Activated T-helper 1 cell treated with anti-CD3 and anti-CD28 coated beads, Interleukin-12 subunit alpha, Interleukin-12 subunit beta, Interleukin-2, Interleukin-4 antibody, amounts not matched to agents 30 ng/mL and 10 ng/mL and 1 ng/mL, durations not matched to agents 14 hours and 24 hours and 36 hours (primary cell): ENCODE measurements at regions of chrX and their contacts with region 1.

Region 1: DNA sequence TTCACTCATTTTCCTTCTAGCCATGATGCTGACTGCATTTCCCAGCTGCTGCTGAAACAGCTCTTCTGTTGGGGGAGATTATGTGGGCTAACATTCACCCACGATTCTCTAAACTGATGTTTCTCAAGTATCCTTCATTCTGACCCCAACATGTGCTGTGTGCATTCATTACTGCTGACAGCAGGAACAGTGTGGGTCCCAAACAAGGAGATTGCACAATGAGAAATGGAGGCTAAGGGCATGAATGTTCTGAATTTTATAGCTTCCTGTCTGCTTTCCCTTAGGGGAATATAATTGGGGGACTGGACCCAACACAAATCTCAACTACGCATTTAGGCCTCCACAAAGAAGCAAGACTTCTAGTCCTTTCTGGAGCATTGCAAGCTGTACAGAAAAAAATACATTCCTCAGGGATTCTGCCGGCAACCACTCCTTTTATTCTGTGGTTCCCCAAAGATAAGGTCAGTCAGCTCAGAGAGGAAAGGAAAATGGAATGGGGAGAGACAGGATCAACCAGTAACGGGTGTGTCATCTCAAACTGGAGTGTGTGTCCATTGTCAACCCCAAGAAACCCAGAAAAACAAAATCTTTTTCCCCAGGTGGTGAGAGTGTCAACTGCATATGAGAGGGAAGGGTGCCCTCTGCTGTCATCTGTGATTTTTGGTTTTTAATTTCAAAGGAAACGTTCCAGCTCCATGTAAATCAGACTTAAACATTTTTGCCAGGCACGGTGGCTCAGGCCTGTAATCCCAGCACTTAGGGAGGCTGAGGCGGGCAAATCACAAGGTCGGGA is 81.5 kb upstream of the EGFL6 start:
- DNase-seq: peak; percentile 27
- H3K4me3 Mint-ChIP-seq: peak overlapping the region; percentile 7
- H3K27ac Mint-ChIP-seq: peak overlapping the region; percentile 61
- H3K4me1 Mint-ChIP-seq: peaks cover 26% of the 10 kb centered on the region
- H3K27me3 Mint-ChIP-seq: no peaks in the 10 kb centered on the region

Region 2: GRCh38 chrX:12984629-12985319 is 503.2 kb before region 1 on chrX:
- intact Hi-C with region 1: loop called (anchors 2 kb)
- DNase-seq: peak; percentile 59
- H3K4me3 Mint-ChIP-seq: peak overlapping the region; percentile 45
- H3K27ac Mint-ChIP-seq: peak overlapping the region; percentile 93
- H3K4me1 Mint-ChIP-seq: peaks cover 65% of the 10 kb centered on the region
- H3K27me3 Mint-ChIP-seq: no peaks in the 10 kb centered on the region

Region 3: GRCh38 chrX:12999422-12999821 is 488.5 kb before region 1 on chrX:
- intact Hi-C with region 1: loop called (anchors 5 kb)
- DNase-seq: peak; percentile 51
- H3K4me3 Mint-ChIP-seq: peak overlapping the region; percentile 63
- H3K27ac Mint-ChIP-seq: peak overlapping the region; percentile 98
- H3K4me1 Mint-ChIP-seq: peaks cover 59% of the 10 kb centered on the region
- H3K27me3 Mint-ChIP-seq: no peaks in the 10 kb centered on the region

Region 4: DNA sequence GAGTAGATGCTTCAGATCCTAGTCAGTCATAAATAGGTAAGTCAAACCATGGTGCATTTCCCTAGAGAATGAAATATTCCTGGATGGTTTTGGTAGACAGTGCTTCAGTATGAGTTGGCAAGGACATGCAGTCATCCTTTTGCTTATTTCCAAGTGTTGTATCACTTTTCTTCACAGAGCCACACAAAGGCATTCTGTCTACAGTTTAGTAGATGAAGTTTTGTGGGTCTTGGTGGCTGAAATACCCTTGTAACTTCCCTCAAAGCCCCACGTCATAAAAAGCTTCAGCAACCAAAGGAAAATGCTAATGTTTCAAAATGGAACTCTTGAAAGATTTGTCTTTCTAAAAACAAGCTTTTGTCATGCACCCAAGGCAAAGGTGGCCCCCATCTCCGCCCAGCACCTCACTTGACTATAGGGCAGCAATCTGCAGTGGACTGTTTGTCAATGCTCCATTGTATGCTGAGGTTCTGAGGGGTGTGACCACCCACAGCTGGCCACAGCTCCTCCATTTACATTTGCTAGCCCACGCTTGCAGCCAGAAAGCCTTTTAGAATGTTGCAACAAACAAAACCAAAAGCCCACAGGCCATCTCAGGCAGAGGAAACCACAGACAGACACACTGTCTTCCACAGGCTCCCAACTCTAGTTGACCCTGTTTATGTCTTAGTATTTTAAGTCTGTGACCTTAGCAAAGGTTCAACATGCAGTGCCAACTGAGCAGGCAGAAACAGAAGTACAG is 356.4 kb before region 1 on chrX:
- intact Hi-C with region 1: no loop called
- DNase-seq: peak; percentile 6
- H3K4me3 Mint-ChIP-seq: peak overlapping the region; percentile 26
- H3K27ac Mint-ChIP-seq: peak overlapping the region; percentile 55
- H3K4me1 Mint-ChIP-seq: peaks cover 33% of the 10 kb centered on the region
- H3K27me3 Mint-ChIP-seq: no peaks in the 10 kb centered on the region

Region 5: DNA sequence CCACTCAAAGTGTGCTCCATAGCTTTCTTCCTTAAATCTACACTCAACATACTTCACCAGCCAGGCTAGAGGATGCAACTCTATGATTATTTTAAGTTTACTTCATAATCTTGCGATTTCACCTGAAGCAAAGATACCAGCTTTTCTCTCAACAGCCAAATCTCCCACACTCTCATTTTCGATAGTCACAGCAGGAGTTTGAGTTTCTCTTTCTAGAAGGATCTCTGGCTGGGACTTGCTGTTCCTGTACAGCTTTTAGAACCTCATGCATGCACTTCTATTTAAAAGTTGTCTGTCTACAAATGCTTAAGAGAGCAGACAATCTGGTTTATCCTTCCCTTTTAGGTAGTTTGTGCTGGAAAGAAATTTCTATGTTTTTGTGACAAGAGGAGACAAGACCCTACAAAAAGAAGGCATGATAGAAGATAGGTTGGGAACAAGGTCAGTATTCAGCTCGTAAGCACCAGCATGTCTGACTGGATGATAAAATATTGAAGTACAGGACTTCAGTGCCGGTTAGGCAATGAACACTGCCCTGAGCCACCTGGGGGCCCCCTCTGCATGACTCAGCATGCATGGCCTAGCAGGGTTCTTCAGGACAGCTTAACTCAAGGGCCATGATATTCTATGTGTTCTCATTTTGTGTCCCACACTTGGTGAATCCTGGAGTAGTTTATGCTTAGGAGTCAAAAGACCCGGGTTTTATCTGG is 233.7 kb before region 1 on chrX:
- intact Hi-C with region 1: loop called (anchors 5 kb)
- DNase-seq: no peak
- H3K4me3 Mint-ChIP-seq: peak overlapping the region; percentile 3
- H3K27ac Mint-ChIP-seq: peak overlapping the region; percentile 14
- H3K4me1 Mint-ChIP-seq: peaks cover 59% of the 10 kb centered on the region
- H3K27me3 Mint-ChIP-seq: no peaks in the 10 kb centered on the region

Region 6: GRCh38 chrX:13376857-13377549 is 110.9 kb before region 1 on chrX:
- intact Hi-C with region 1: loop called (anchors 5 kb)
- DNase-seq: no peak
- H3K4me3 Mint-ChIP-seq: no peak overlapping the region
- H3K27ac Mint-ChIP-seq: peak overlapping the region; percentile 27
- H3K4me1 Mint-ChIP-seq: peaks cover 41% of the 10 kb centered on the region
- H3K27me3 Mint-ChIP-seq: no peaks in the 10 kb centered on the region

Region 7: GRCh38 chrX:13411496-13412207 is 76.3 kb before region 1 on chrX:
- intact Hi-C with region 1: no loop called
- DNase-seq: no peak
- H3K4me3 Mint-ChIP-seq: no peak overlapping the region
- H3K27ac Mint-ChIP-seq: no peak overlapping the region
- H3K4me1 Mint-ChIP-seq: no peaks in the 10 kb centered on the region
- H3K27me3 Mint-ChIP-seq: no peaks in the 10 kb centered on the region

Region 8: GRCh38 chrX:13473442-13474163 is 14.3 kb before region 1 on chrX:
- intact Hi-C with region 1: loop called (anchors 1 kb)
- DNase-seq: no peak
- H3K4me3 Mint-ChIP-seq: peak overlapping the region; percentile 73
- H3K27ac Mint-ChIP-seq: peak overlapping the region; percentile 92
- H3K4me1 Mint-ChIP-seq: peaks cover 44% of the 10 kb centered on the region
- H3K27me3 Mint-ChIP-seq: no peaks in the 10 kb centered on the region